Heart right ventricle (tissue), 16 donors: ENCODE measurements at regions of chr7 and their contacts with region 1.

Region 1: GRCh38 chr7:39271402-39271801 is 293.7 kb downstream of the POU6F2 start:
- DNase-seq: peak; percentile 17 to 63
- ATAC-seq: peak in 3 of 8 donors; percentile 54 to 64 (median 61)
- H3K4me3 ChIP-seq: no peak overlapping the region
- H3K27ac ChIP-seq: no peak overlapping the region
- H3K4me1 ChIP-seq: peaks cover 0 to 3% (median 0%) of the 10 kb centered on the region in 9 donors
- H3K27me3 ChIP-seq: peaks cover 0 to 10% (median 0%) of the 10 kb centered on the region in 7 donors
- CTCF ChIP-seq: no peak

Region 2: GRCh38 chr7:39394105-39394680 is 122.8 kb after region 1 on chr7:
- intact Hi-C with region 1: no loop called
- DNase-seq: no peak
- ATAC-seq: no peak
- H3K4me3 ChIP-seq: no peak overlapping the region
- H3K27ac ChIP-seq: no peak overlapping the region
- H3K4me1 ChIP-seq: no peaks in the 10 kb centered on the region
- H3K27me3 ChIP-seq: peaks cover 0 to 33% (median 5%) of the 10 kb centered on the region in 7 donors
- CTCF ChIP-seq: no peak

Region 3: GRCh38 chr7:39517240-39517639 is 245.8 kb after region 1 on chr7:
- intact Hi-C with region 1: loop called in 1 of 10 experiments (anchors 5 kb)
- DNase-seq: no peak
- ATAC-seq: no peak
- H3K4me3 ChIP-seq: no peak overlapping the region
- H3K27ac ChIP-seq: no peak overlapping the region
- H3K4me1 ChIP-seq: peaks cover 0 to 4% (median 0%) of the 10 kb centered on the region in 9 donors
- H3K27me3 ChIP-seq: peaks cover 0 to 8% (median 0%) of the 10 kb centered on the region in 7 donors
- CTCF ChIP-seq: no peak